MCF 10A (cell line): ENCODE measurements at regions of chr20 and their contacts with region 1.

Region 1: DNA sequence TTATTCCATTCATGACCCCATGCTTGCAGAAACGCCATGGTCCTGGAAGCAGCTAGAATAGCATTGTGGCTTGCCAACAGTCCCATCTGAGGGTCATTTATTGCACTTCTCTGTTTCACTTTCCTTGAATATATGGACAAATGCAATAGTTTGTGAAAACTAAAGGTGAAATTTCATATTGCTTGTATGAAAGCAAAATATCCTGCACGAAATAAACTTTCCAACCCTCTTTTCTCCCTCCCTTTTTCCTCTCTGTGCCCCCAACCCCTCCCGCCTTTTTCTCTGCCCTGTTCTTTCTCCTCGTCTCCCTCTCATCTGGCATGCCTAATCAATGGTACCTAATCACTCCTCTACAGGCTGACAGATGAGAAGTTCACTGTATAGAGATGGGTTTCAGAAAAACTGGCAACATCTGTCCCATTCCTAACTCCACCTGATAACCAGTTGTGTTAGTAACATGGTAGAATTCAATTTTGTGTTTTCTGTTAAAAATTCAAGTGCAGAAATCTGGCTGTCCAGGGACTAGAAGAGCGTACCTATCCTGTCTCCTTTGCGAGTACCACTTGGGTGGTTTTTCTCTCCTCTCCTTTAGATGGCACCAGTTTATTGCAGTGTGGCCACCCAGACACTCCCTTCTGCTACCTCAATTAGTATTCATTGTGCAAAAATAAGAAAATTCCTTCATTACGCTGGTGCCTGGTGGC is 198.6 kb downstream of the FOXA2 start:
- DNase-seq: peak; percentile 50
- H3K4me3 Mint-ChIP-seq: no peak overlapping the region
- H3K27ac Mint-ChIP-seq: no peak overlapping the region
- H3K4me1 Mint-ChIP-seq: peaks cover 51% of the 10 kb centered on the region
- H3K27me3 Mint-ChIP-seq: no peaks in the 10 kb centered on the region
- CTCF ChIP-seq: peak; percentile 27

Region 2: GRCh38 chr20:21933526-21933925 is 452.2 kb before region 1 on chr20:
- CTCF ChIA-PET with region 1: no interaction called
- POLR2A ChIA-PET with region 1: no interaction called
- intact Hi-C with region 1: no loop called
- DNase-seq: no peak
- H3K4me3 Mint-ChIP-seq: no peak overlapping the region
- H3K27ac Mint-ChIP-seq: no peak overlapping the region
- H3K4me1 Mint-ChIP-seq: no peaks in the 10 kb centered on the region
- H3K27me3 Mint-ChIP-seq: no peaks in the 10 kb centered on the region
- CTCF ChIP-seq: no peak

Region 3: DNA sequence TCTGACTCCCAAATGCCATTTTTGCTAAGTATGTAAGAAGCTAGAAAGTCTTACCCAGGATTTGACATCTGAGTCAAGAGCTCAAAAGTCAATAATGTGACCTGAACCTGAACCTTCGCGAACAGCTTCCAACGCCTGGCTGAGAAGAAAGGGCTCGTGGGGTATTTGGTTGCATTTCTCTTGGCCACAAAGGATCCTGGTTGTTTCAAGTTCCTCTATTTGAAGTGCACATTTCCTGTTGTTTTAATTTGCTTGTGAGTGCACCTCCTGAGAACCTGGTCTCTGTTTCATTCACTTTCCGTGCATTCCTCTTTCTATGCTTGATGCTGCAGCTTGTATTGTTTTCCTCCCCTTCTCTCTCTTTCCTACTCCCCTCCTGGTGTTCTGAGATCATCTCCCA is 13.9 kb before region 1 on chr20:
- CTCF ChIA-PET with region 1: interaction called, 6 read pairs
- POLR2A ChIA-PET with region 1: interaction called, 28 read pairs
- intact Hi-C with region 1: loop called (anchors 1 kb)
- DNase-seq: no peak
- H3K4me3 Mint-ChIP-seq: no peak overlapping the region
- H3K27ac Mint-ChIP-seq: no peak overlapping the region
- H3K4me1 Mint-ChIP-seq: peaks cover 37% of the 10 kb centered on the region
- H3K27me3 Mint-ChIP-seq: no peaks in the 10 kb centered on the region
- CTCF ChIP-seq: no peak

Region 4: GRCh38 chr20:22403632-22404361 is 18.0 kb after region 1 on chr20:
- CTCF ChIA-PET with region 1: interaction called, 13 read pairs
- POLR2A ChIA-PET with region 1: interaction called, 33 read pairs
- intact Hi-C with region 1: no loop called
- DNase-seq: no peak
- H3K4me3 Mint-ChIP-seq: peak overlapping the region; percentile 20
- H3K27ac Mint-ChIP-seq: peak overlapping the region; percentile 5
- H3K4me1 Mint-ChIP-seq: peaks cover 26% of the 10 kb centered on the region
- H3K27me3 Mint-ChIP-seq: no peaks in the 10 kb centered on the region
- CTCF ChIP-seq: no peak

Region 5: GRCh38 chr20:22453239-22454080 is 67.7 kb after region 1 on chr20:
- CTCF ChIA-PET with region 1: interaction called, 16 read pairs
- POLR2A ChIA-PET with region 1: interaction called, 6 read pairs
- intact Hi-C with region 1: loop called (anchors 5 kb)
- DNase-seq: peak; percentile 67
- H3K4me3 Mint-ChIP-seq: no peak overlapping the region
- H3K27ac Mint-ChIP-seq: peak overlapping the region; percentile 31
- H3K4me1 Mint-ChIP-seq: no peaks in the 10 kb centered on the region
- H3K27me3 Mint-ChIP-seq: no peaks in the 10 kb centered on the region
- CTCF ChIP-seq: peak; percentile 74

Region 6: GRCh38 chr20:22546344-22546743 is 160.6 kb after region 1 on chr20:
- CTCF ChIA-PET with region 1: no interaction called
- POLR2A ChIA-PET with region 1: no interaction called
- intact Hi-C with region 1: no loop called
- DNase-seq: no peak
- H3K4me3 Mint-ChIP-seq: no peak overlapping the region
- H3K27ac Mint-ChIP-seq: no peak overlapping the region
- H3K4me1 Mint-ChIP-seq: no peaks in the 10 kb centered on the region
- H3K27me3 Mint-ChIP-seq: peaks cover 11% of the 10 kb centered on the region
- CTCF ChIP-seq: no peak